ENCODE measurements at regions of chr2 and their contacts with region 1.

Region 1: DNA sequence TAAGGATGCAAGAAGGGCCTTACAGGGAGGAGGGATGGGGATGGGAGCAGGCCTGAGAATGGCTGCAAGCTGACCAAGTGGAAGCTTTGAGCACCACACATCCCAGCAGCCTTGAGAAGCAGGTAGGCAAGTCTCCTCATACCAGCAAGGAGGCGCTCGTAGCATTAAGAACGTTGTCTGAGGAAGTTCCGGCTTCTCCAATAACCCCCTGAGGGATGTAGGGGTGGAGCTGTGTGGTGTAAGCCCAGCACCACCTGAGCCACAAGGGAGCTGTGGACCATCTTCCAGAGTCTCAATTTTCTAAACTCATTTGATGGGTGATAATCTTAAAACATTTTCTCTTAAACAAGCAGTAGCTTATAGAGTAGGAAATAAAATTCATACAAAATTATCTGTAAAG is 50.6 kb downstream of the ST3GAL5 start:
- DNase-seq: no peak
- H3K4me3 ChIP-seq: no peak overlapping the region
- H3K27ac ChIP-seq: no peak overlapping the region
- H3K4me1 ChIP-seq: no peaks in the 10 kb centered on the region
- H3K27me3 ChIP-seq: no peaks in the 10 kb centered on the region
- CTCF ChIP-seq: no peak
- POLR2A ChIP-seq: no peak

Region 2: DNA sequence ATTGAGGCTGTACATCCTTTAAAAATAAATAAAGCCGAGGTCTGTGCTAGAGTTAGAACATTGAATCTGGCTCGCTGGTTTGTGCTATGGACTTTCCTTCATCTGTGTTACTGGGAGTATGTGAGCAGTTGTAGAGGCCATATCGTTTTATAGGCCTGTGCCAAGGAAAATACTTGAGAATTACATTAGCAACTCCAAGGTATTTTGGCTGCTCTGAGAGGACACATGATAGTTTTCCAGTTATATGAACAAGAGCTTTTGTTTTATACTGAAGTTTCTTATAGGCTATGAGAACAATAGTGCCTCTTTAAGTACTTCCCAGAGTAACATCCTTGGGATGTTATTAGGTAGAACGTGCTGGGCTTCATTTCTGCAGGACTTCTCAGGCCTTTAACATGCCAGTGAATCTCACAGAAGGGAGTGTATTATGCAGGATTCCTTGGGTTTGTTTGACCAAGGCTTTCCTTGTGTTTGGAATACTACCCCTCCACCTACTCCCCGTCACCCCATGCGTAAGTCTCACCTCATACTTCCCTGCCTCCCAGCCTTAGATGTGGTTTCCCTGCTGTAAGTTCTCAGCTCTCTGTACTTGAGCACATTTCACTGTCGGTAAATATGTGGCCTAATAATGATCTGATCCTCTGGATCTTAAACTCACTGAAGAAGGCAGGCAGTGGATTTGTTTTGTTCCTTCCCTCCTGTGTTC is 684.0 kb before region 1 on chr2:
- intact Hi-C with region 1: no loop called
- DNase-seq: no peak
- H3K4me3 ChIP-seq: no peak overlapping the region
- H3K27ac ChIP-seq: peak overlapping the region; percentile 26 to 87 (median 85)
- H3K4me1 ChIP-seq: peaks cover 58 to 61% of the 10 kb centered on the region in 2 donors
- H3K27me3 ChIP-seq: no peaks in the 10 kb centered on the region
- CTCF ChIP-seq: no peak
- POLR2A ChIP-seq: no peak

Region 3: DNA sequence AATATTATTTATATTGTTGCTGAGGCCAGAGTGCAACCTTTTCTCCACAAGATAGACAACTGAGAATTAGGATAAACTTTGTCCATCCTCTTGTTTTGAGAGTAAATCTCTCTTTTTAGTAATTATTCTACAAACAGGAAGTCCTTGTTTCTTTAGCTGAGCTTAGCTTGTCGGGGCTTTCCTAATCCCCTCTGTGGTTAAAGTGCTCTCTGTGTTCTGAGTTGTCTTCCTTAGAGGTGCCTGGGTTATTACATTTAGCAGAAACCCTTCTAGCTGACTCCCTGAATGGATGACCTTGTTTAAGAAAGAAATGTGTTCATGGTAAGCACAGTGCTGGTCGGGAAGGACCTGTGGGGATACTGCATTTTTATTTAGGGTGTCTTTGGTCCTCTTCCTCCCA is 209.5 kb before region 1 on chr2:
- intact Hi-C with region 1: no loop called
- DNase-seq: no peak
- H3K4me3 ChIP-seq: no peak overlapping the region
- H3K27ac ChIP-seq: no peak overlapping the region
- H3K4me1 ChIP-seq: no peaks in the 10 kb centered on the region
- H3K27me3 ChIP-seq: no peaks in the 10 kb centered on the region
- CTCF ChIP-seq: no peak
- POLR2A ChIP-seq: no peak

Region 4: DNA sequence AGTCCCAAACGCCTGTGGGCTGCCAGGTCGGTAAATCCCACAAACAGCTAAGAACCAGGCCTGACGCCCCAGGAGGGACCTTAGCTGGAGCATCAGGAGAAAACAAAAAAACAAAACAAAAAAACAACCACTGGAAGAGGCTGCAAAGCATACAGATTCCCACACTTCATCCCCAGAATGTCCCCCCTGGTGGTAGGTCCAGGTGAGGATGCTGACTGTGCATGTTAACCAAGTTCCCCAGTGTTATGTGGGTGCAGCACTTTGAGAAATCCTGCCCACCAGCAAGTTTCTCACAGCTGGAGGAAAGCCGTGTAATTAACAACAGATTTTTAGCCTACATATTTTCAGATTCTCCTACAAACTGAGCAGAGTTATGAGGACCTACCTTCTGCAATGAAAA is 35.5 kb after region 1 on chr2:
- intact Hi-C with region 1: loop called (anchors 5 kb)
- DNase-seq: no peak
- H3K4me3 ChIP-seq: no peak overlapping the region
- H3K27ac ChIP-seq: peak overlapping the region in 1 of 3 donors; percentile 32
- H3K4me1 ChIP-seq: peaks cover 15 to 51% of the 10 kb centered on the region in 2 donors
- H3K27me3 ChIP-seq: no peaks in the 10 kb centered on the region
- CTCF ChIP-seq: no peak
- POLR2A ChIP-seq: no peak

Region 5: DNA sequence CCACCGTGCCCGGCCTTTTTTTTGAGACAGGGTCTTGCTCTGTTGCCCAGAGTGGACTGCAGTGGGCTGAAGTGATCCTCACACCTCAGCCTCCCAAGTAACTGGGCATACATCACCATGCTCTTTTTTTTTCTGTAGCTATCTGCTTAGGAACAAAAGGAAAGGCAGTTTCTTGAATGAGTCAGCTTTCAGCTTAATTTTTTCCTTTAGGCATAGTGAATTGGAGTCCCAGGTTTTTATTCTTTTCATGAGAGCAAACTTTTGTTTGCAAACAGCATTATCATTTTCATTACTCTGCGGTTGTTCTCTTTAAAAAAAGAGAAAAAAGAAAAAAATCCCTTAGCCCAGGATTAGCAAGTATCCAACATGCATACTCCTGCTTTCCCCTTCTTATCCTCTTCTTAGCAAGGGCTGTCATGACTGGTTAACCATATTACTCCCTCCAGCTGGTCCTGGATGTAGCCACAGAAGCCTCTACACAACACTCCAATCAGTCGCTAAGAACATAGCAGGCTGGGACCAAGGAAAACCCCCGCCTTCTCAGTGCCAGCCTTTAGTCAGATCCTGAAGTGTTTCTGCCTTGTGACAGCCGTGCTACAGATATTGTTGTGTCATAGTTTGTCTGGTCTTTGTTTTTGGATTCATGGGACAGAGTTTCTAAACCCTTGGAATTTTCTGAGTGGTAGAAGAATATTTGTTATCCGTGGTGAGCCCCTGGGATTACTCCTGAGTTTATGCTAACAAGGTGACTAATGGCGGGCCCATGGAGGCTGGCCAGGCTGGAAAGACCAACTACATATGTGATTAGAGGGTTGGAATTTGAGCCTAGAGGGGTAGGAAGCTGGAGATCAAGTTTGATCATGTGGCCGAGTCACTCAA is 73.9 kb after region 1 on chr2:
- intact Hi-C with region 1: no loop called
- DNase-seq: peak; percentile 86 to 87
- H3K4me3 ChIP-seq: no peak overlapping the region
- H3K27ac ChIP-seq: peak overlapping the region; percentile 94 to 96 (median 95)
- H3K4me1 ChIP-seq: peaks cover 32 to 67% of the 10 kb centered on the region in 2 donors
- H3K27me3 ChIP-seq: no peaks in the 10 kb centered on the region
- CTCF ChIP-seq: no peak
- POLR2A ChIP-seq: peak in 1 of 2 donors; percentile 56

Region 6: GRCh38 chr2:86020984-86021383 is 182.8 kb after region 1 on chr2:
- intact Hi-C with region 1: no loop called
- DNase-seq: peak; percentile 83 to 89
- H3K4me3 ChIP-seq: no peak overlapping the region
- H3K27ac ChIP-seq: peak overlapping the region; percentile 69 to 79 (median 74)
- H3K4me1 ChIP-seq: peaks cover 30 to 52% of the 10 kb centered on the region in 2 donors
- H3K27me3 ChIP-seq: no peaks in the 10 kb centered on the region
- CTCF ChIP-seq: no peak
- POLR2A ChIP-seq: peak in 1 of 2 donors; percentile 24

Measured in thyroid gland (tissue), 4 donors.